Panc1 (cell line): ENCODE measurements at regions of chr7 and their contacts with region 1.

Region 1: DNA sequence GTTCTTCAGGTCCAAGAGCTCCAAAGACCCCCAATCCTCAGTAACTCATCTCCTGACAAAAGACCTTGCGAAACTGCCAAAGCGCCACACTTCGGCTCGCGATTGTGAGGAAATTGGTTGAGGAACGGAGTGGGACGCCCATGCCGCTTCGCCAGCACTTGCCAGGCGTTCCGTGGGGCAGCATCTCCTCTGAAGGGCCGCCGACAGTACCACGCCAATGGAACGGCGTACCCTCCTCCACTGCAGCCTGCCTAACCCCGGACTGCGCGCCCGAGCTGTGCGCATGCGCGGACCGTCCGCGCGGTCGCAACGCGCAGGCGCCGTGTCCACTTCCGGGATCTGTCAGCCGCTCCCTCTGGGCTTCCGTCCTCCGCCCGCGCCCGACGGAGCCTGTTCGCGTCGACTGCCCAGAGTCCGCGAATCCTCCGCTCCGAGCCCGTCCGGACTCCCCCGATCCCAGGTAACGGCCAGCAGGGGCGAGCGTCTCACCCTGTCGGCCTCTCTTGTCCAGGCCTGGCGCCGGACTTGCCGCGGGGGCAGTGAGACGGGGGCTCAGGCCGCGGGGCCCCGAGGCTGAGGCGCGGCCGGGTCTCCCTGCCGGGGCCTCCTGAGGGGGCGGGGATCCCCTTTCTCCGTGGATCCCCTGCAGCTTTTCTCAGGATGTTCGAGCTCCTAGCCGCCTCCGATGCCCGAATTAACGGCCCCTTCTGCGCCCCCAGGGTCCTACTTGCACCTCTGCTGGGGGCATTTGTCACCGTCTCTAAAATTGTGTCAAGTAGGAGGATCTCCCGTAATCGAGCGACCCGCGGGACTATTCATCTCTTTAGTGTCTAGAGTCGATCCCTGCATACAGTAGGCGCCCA is at the start of gene ARPC1A:
- DNase-seq: peak; percentile 84
- ATAC-seq: peak; percentile 97
- H3K4me3 ChIP-seq: peak within 1 kb of the TSS; percentile 87 to 96
- H3K27ac ChIP-seq: peak within 1 kb of the TSS; percentile 99
- H3K4me1 ChIP-seq: peaks cover 25% of the 10 kb centered on the region
- H3K27me3 ChIP-seq: no peaks in the 10 kb centered on the region
- CTCF ChIP-seq: no peak
- total RNA-seq, gene ARPC1A: 253 TPM

Region 2: GRCh38 chr7:99340659-99341058 is 14.9 kb after region 1 on chr7:
- CTCF ChIA-PET with region 1: interaction called, 3 read pairs
- POLR2A ChIA-PET with region 1: interaction called, 13 read pairs
- in situ Hi-C with region 1: no loop called
- intact Hi-C with region 1: no loop called
- DNase-seq: no peak
- ATAC-seq: no peak
- H3K4me3 ChIP-seq: no peak overlapping the region
- H3K27ac ChIP-seq: no peak overlapping the region
- H3K4me1 ChIP-seq: no peaks in the 10 kb centered on the region
- H3K27me3 ChIP-seq: no peaks in the 10 kb centered on the region
- CTCF ChIP-seq: no peak

Region 3: DNA sequence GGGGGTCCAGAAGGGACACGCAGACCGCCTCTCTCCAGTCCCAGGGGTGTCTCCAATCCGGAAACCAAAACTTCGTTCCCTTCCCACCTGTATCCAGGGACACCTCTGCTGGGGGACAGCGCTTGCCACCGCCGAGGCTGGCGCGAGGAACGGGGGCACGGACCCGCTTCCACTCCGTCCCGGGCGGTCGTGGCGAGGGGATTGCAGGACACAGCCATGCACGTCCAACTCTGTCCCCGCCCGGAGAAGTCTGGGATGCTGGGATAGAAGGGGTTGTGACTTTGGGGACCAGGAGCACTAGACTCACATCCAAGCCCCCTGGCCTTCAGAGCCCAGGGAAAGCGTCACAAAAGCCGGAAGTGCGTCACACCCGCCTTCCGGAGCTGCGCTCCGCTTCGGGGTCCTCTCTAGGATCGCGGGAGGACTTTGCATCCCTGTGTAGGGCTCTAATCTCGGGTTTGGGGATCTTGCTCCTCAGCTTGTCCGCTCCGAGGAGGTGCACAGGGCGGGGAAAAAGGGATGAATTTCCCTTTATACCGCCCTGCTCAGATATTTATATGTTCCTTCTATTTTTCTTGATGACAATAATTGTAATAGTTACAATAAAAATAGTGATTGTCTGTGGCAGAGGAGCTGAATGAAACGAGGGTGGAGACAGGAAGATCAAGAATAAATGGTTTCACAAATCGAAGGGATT is 226.1 kb after region 1 on chr7 and contains the start of gene FAM200A:
- CTCF ChIA-PET with region 1: no interaction called
- POLR2A ChIA-PET with region 1: no interaction called
- in situ Hi-C with region 1: no loop called
- intact Hi-C with region 1: no loop called
- DNase-seq: peak; percentile 72
- ATAC-seq: peak; percentile 100
- H3K4me3 ChIP-seq: peak within 1 kb of the TSS; percentile 96 to 97
- H3K27ac ChIP-seq: peak within 1 kb of the TSS; percentile 85
- H3K4me1 ChIP-seq: no peaks in the 10 kb centered on the region
- H3K27me3 ChIP-seq: no peaks in the 10 kb centered on the region
- CTCF ChIP-seq: no peak
- total RNA-seq, gene FAM200A: 4.6 TPM